Gastrocnemius medialis (tissue), 4 donors: ENCODE measurements at regions of chr20 and their contacts with region 1.

Region 1: DNA sequence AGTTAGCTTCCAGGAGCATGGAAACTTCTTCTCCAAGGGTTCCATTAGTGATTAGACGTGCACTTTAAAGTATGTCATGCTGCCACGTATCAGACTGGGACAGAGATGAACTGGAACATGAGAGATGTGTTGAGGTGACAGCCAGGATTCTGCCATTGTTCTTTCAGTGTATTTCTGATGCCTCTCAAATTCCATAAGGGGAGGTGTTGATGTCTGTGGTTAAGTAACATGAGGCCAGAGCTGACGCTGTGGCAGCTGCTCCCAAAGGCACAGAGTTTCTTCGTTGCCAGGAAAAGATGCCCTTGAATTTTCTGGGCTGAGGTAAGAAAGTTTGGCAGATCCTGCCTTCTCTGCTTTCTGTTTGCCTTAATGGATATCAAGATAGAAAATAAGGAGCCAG is 63.5 kb downstream of the TRMT6 start:
- DNase-seq: peak; percentile 83 to 86
- ATAC-seq: peak; percentile 72 to 83
- H3K4me3 ChIP-seq: no peak overlapping the region
- H3K27ac ChIP-seq: peak overlapping the region; percentile 88 to 94 (median 92)
- H3K4me1 ChIP-seq: peaks cover 43 to 48% of the 10 kb centered on the region in 2 donors
- H3K27me3 ChIP-seq: no peaks in the 10 kb centered on the region
- CTCF ChIP-seq: no peak
- POLR2A ChIP-seq: peak in 1 of 2 donors; percentile 32

Region 2: GRCh38 chr20:5621305-5621704 is 265.5 kb before region 1 on chr20:
- in situ Hi-C with region 1: no loop called
- intact Hi-C with region 1: no loop called
- DNase-seq: no peak
- ATAC-seq: no peak
- H3K4me3 ChIP-seq: no peak overlapping the region
- H3K27ac ChIP-seq: no peak overlapping the region
- H3K4me1 ChIP-seq: no peaks in the 10 kb centered on the region
- H3K27me3 ChIP-seq: no peaks in the 10 kb centered on the region
- CTCF ChIP-seq: no peak
- POLR2A ChIP-seq: no peak

Region 3: DNA sequence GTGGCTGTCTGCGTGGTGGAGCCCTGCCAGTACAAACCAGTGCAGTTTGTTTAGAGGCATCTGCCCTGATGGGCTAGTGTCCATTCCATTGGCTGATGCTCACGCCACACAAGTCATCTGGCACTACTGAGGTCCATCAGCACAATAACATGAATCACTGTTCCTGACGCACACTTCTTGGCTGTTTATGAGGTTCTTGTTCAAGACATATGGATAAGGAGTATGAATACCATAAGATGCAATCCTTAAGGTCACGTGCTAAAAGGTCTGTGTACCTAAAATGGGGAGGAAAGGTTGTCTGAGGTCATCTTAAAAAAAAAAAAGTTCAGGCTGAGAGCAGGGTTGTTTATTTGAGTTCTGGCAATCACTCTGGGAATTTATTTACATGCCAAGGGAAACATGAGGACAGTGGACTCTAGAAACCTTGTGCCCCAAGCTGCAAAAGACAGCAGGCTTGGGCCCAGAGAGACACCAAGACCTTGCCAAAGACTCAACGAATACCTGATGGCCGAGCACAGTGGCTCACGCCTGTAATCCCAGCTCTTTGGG is 190.7 kb before region 1 on chr20:
- in situ Hi-C with region 1: no loop called
- intact Hi-C with region 1: loop called (anchors 5 kb)
- DNase-seq: peak; percentile 34 to 62
- ATAC-seq: peak; percentile 94 to 97
- H3K4me3 ChIP-seq: no peak overlapping the region
- H3K27ac ChIP-seq: peak overlapping the region; percentile 50 to 68 (median 57)
- H3K4me1 ChIP-seq: peaks cover 4% of the 10 kb centered on the region in 2 donors
- H3K27me3 ChIP-seq: no peaks in the 10 kb centered on the region
- CTCF ChIP-seq: no peak
- POLR2A ChIP-seq: no peak

Region 4: GRCh38 chr20:5779071-5779900 is 107.5 kb before region 1 on chr20:
- in situ Hi-C with region 1: no loop called
- intact Hi-C with region 1: loop called (anchors 2 kb)
- DNase-seq: peak; percentile 75 to 84
- ATAC-seq: peak; percentile 98 to 99
- H3K4me3 ChIP-seq: no peak overlapping the region
- H3K27ac ChIP-seq: peak overlapping the region; percentile 84 to 94 (median 89)
- H3K4me1 ChIP-seq: peaks cover 18 to 29% of the 10 kb centered on the region in 2 donors
- H3K27me3 ChIP-seq: no peaks in the 10 kb centered on the region
- CTCF ChIP-seq: no peak
- POLR2A ChIP-seq: peak in 1 of 2 donors; percentile 75

Region 5: DNA sequence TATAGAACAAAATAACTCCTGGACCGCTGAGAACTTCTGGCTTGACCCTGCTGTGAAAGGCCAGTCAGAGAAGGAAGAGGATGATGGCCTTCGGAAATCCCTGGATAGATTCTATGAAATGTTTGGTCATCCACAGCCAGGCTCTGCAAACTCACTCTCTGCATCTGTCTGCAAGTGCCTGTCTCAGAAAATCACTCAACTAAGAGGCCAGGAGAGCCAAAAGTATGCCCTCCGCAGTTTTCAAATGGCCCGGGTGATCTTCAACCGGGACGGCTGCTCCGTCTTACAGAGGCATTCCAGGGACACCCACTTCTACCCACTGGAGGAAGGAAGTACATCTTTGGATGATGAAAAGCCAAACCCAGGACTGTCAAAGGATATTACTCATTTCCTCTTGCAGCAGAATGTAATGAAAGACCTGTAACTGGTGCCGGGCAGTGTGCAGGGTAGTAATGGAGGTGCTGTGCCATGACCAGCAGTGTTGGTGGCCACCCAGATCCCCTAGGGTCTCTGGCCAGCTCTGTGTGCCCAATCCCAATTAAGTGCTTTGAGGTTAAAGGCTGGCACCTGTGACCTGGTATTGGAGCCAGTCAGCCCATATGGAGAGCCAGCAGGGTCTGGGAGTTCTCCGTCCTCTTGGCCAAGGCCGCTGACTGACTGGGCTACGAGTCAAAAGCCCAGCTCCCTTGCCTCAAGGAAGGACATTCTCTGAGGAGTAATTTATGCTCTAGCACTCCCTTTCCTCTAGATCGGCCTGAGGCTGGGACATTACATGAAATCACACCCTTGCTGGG is 23.6 kb before region 1 on chr20:
- in situ Hi-C with region 1: no loop called
- intact Hi-C with region 1: loop called (anchors 2 kb)
- DNase-seq: peak; percentile 35 to 55
- ATAC-seq: peak; percentile 45 to 77
- H3K4me3 ChIP-seq: no peak overlapping the region
- H3K27ac ChIP-seq: peak overlapping the region; percentile 81 to 92 (median 90)
- H3K4me1 ChIP-seq: peaks cover 43 to 48% of the 10 kb centered on the region in 2 donors
- H3K27me3 ChIP-seq: no peaks in the 10 kb centered on the region
- CTCF ChIP-seq: no peak
- POLR2A ChIP-seq: peak; percentile 42 to 56